Psoas muscle (tissue), 8 donors: ENCODE measurements at regions of chr13 and their contacts with region 1.

Region 1: DNA sequence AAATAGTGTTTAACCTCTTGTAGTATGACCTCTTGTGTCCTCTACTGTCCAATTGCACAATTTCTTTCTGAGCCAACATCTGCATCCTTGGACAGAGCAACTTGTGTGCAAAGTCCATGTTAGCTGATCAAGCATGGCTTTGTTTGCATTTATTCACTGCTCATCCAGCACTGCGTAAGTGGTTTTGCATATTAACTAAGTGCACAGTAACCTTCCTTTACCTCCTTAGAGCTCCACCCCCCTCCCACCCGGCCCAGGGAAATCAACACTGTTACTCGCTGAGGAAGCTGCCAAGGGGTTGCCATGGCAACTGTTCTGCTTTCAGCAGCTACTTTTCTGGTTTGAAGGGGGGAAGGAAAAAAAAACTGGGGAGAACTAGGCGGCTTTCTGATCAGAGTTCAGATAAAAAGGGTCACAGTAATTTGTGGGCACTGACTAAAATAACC is 153.5 kb upstream of the KLF12 start:
- DNase-seq: peak; percentile 71 to 77
- ATAC-seq: peak in 3 of 4 donors; percentile 21 to 35 (median 27)
- H3K4me3 ChIP-seq: peak overlapping the region; percentile 40
- H3K27ac ChIP-seq: peak overlapping the region; percentile 33
- H3K4me1 ChIP-seq: peaks cover 13% of the 10 kb centered on the region
- H3K27me3 ChIP-seq: no peaks in the 10 kb centered on the region
- CTCF ChIP-seq: no peak

Region 2: DNA sequence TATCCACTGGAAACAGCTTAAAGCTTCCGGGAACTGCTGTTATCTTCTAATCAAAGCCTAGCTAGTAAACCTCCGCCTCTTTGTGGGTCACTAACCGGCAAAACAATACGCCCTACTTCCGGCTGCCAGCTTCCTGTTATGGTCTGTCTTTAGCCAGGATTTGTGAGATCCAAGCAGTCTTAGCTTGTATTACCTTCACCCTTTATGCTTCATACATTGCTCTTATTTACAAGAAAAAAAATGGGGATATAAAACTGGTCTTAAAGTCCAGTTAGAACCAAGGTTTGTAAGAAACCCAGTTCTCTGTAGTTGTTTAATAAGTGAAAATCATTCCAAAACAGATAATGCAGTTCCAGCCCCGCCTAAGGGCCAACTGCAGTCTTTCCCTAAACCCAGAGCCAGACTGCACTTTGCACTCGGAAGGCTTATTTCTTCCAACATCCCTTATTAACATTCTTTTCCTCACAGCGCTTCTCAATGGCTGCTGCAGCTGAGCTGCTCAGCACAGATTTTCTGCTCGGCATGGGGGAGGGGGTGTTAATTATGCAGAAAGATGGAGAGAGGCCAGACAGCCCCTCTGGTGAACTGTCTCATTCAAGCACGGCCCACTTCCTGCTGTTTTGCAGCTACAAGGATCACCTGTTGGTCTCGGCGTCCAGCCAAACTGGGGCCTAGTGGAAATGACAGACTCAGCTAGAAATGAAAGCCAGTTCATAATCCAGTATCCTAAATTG is 521.9 kb before region 1 on chr13:
- intact Hi-C with region 1: loop called in 1 of 2 experiments (anchors 10 kb)
- DNase-seq: peak; percentile 71 to 83
- ATAC-seq: peak; percentile 52 to 64 (median 59)
- H3K4me3 ChIP-seq: peak overlapping the region; percentile 45
- H3K27ac ChIP-seq: peak overlapping the region; percentile 73
- H3K4me1 ChIP-seq: peaks cover 31% of the 10 kb centered on the region
- H3K27me3 ChIP-seq: no peaks in the 10 kb centered on the region
- CTCF ChIP-seq: no peak

Region 3: DNA sequence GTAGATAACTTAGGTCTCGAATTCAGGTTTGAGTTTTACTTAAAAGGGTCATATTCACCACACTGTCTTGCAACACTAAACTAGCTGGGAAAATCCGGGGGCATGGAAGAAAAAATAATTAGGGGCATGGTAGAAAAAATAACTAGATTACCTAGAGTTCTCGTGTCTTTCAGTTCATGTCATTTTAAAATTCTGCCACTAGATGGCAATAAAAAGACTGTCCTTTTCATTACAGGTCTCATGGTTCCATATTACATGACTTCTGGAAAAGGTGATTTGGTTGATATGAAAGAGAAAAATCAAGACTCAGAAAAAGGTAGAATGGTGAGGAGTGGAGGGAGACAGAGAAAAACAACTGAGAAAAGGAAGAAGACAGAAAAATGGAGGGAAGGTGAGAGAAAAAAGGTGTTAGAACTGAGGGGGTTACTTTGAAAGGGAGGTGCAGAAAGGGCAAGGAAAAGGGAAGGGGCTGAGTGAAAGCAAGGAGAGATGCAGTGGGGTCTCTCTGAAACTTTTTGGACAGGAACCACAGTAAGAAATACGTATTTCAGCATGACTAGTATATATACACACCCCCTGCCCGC is 452.5 kb before region 1 on chr13:
- intact Hi-C with region 1: loop called (anchors 2 to 5 kb)
- DNase-seq: no peak
- ATAC-seq: peak in 2 of 4 donors; percentile 68 to 75
- H3K4me3 ChIP-seq: no peak overlapping the region
- H3K27ac ChIP-seq: no peak overlapping the region
- H3K4me1 ChIP-seq: peaks cover 4% of the 10 kb centered on the region
- H3K27me3 ChIP-seq: no peaks in the 10 kb centered on the region
- CTCF ChIP-seq: peak; percentile 70

Region 4: GRCh38 chr13:73945871-73946270 is 341.9 kb before region 1 on chr13:
- intact Hi-C with region 1: loop called in 1 of 2 experiments (anchors 5 kb)
- DNase-seq: peak; percentile 31 to 77
- ATAC-seq: peak; percentile 75 to 94 (median 89)
- H3K4me3 ChIP-seq: no peak overlapping the region
- H3K27ac ChIP-seq: peak overlapping the region; percentile 46
- H3K4me1 ChIP-seq: peaks cover 8% of the 10 kb centered on the region
- H3K27me3 ChIP-seq: no peaks in the 10 kb centered on the region
- CTCF ChIP-seq: no peak

Region 5: GRCh38 chr13:74062933-74063332 is 224.8 kb before region 1 on chr13:
- intact Hi-C with region 1: loop called in 1 of 2 experiments (anchors 10 kb)
- DNase-seq: peak; percentile 45 to 77
- ATAC-seq: peak; percentile 90 to 97 (median 96)
- H3K4me3 ChIP-seq: peak overlapping the region; percentile 53
- H3K27ac ChIP-seq: peak overlapping the region; percentile 83
- H3K4me1 ChIP-seq: peaks cover 43% of the 10 kb centered on the region
- H3K27me3 ChIP-seq: no peaks in the 10 kb centered on the region
- CTCF ChIP-seq: no peak

Region 6: GRCh38 chr13:74133657-74134201 is 154.0 kb before region 1 on chr13:
- intact Hi-C with region 1: loop called (anchors 2 kb)
- DNase-seq: peak; percentile 81 to 92
- ATAC-seq: peak; percentile 71 to 77 (median 73)
- H3K4me3 ChIP-seq: peak overlapping the region; percentile 89
- H3K27ac ChIP-seq: peak overlapping the region; percentile 90
- H3K4me1 ChIP-seq: peaks cover 25% of the 10 kb centered on the region
- H3K27me3 ChIP-seq: no peaks in the 10 kb centered on the region
- CTCF ChIP-seq: no peak

Region 7: DNA sequence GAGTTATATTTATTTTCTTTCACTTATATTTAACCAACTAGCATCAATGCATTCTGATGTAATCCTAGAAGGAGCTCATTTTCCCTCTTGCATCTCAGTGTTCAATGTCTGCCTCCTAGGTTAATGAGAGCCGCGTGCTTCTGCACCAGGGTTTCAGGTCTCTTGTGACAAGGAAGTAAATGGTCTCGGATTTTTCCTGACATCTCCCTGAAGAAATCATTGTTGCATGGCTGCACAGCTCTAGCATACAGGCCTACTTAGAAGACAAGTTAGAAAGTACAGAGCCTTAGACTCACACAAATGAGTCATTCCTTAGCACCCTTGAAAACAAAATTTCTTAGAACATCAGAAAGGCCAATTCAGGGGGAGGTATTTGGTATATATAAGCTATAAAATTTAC is 96.3 kb before region 1 on chr13:
- intact Hi-C with region 1: loop called in 1 of 2 experiments (anchors 10 kb)
- DNase-seq: no peak
- ATAC-seq: no peak
- H3K4me3 ChIP-seq: no peak overlapping the region
- H3K27ac ChIP-seq: no peak overlapping the region
- H3K4me1 ChIP-seq: no peaks in the 10 kb centered on the region
- H3K27me3 ChIP-seq: no peaks in the 10 kb centered on the region
- CTCF ChIP-seq: no peak